Heart right ventricle (tissue), 16 donors: ENCODE measurements at regions of chr9 and their contacts with region 1.

Region 1: DNA sequence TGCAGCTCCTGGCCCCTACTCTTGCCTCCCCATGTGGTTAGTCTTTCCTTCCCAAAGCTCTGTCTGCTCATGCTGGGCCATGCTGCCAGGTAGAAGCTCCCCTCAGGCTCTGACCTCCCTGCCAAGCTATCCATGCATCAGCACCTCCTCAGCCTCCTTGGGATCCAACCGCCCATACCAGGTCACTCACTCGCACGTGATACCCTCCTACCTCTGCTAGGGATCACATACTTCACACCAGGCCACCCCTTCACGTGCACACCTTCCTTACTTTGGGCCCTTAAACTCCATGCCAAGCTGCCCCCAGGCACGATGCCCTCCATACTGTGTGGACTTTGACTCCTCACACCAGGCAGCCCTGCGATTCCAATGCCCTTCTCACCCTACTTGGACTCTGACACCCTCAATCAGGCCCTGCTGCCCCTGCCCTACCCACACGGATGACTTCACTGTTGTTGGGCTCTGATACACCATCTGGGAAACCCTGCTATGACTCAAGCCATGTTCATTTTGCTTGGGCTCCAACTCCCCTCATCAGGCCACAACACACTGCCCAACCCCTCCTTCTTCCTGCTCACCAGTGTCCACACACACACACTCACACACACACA is 34.1 kb downstream of the ZNF483 start:
- DNase-seq: no peak
- ATAC-seq: peak in 1 of 8 donors; percentile 33
- H3K4me3 ChIP-seq: no peak overlapping the region
- H3K27ac ChIP-seq: no peak overlapping the region
- H3K4me1 ChIP-seq: no peaks in the 10 kb centered on the region
- H3K27me3 ChIP-seq: no peaks in the 10 kb centered on the region
- CTCF ChIP-seq: no peak

Region 2: DNA sequence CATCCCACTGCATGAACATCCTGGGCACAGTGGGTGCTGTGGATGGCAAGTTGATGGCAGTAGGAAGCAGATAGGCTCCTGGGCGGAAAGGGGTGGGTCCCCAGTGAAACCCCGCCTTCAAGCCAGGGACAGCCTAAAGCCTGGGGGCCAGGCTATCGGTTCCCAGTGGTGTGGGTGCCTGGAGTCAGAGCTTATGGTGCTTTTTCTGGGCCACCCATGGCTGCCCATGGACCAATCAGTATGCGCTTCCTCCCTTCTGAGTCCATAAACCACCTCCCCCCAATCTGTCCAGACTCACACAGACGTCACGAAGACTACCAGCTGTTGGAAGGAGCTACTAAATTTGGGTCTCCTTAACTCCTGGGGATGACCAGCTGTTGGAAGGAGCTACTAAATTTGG is 57.5 kb before region 1 on chr9:
- intact Hi-C with region 1: loop called in 1 of 10 experiments (anchors 10 kb)
- DNase-seq: no peak
- ATAC-seq: peak in 1 of 8 donors; percentile 14
- H3K4me3 ChIP-seq: no peak overlapping the region
- H3K27ac ChIP-seq: no peak overlapping the region
- H3K4me1 ChIP-seq: no peaks in the 10 kb centered on the region
- H3K27me3 ChIP-seq: no peaks in the 10 kb centered on the region
- CTCF ChIP-seq: no peak

Region 3: GRCh38 chr9:111700776-111701175 is 141.7 kb after region 1 on chr9:
- intact Hi-C with region 1: no loop called
- DNase-seq: no peak
- ATAC-seq: no peak
- H3K4me3 ChIP-seq: no peak overlapping the region
- H3K27ac ChIP-seq: peak overlapping the region in 2 of 10 donors; percentile 45 to 50
- H3K4me1 ChIP-seq: peaks cover 0 to 11% (median 0%) of the 10 kb centered on the region in 9 donors
- H3K27me3 ChIP-seq: no peaks in the 10 kb centered on the region
- CTCF ChIP-seq: no peak